Common myeloid progenitor, CD34-positive (primary cell): ENCODE measurements at regions of chr1 and their contacts with region 1.

Region 1: DNA sequence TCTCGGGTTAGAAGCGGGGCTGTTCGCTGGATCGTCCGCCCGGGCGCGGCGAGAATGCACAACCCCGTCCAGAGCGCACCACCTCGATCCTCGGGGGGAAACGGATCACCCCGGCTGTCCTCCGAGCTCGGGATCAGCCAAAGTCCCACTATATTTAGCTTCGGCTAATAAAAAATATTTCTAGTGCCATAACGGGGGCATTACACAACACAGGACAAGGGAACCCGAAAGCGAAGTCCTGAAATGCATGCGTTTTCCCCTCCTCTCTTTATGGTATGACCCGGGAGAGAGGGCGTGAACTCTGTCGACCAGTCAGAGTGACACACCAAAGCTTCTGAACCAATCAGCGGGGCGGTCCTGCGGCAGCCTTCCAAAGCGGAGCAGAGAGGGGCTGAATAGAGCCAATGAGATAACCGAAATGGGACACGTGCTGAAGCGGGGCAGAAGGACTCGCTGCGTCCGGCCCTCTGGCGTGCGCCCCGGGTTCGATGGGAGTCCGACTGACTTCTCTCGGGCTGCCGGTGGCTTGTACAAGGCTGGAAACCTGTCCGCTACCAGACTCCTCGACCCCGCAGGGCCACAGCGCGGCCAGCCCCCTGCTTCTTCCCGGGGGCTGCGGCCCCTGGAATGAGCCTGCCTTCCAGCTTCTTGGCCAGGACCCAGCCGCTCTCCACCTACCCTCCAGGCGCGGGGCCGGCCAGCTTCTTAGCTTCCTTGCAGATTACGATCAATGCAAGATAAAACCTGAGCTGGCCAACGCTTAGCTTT is at the start of gene ALDH4A1:
- DNase-seq: peak; percentile 96 to 98 (median 97)
- H3K4me3 ChIP-seq: peak within 1 kb of the TSS; percentile 62 to 91 (median 80)
- H3K27ac ChIP-seq: peak within 1 kb of the TSS; percentile 97 to 99
- H3K4me1 ChIP-seq: peaks cover 10 to 57% (median 33%) of the 10 kb centered on the region in 4 experiments
- H3K27me3 ChIP-seq: no peaks in the 10 kb centered on the region

Region 2: DNA sequence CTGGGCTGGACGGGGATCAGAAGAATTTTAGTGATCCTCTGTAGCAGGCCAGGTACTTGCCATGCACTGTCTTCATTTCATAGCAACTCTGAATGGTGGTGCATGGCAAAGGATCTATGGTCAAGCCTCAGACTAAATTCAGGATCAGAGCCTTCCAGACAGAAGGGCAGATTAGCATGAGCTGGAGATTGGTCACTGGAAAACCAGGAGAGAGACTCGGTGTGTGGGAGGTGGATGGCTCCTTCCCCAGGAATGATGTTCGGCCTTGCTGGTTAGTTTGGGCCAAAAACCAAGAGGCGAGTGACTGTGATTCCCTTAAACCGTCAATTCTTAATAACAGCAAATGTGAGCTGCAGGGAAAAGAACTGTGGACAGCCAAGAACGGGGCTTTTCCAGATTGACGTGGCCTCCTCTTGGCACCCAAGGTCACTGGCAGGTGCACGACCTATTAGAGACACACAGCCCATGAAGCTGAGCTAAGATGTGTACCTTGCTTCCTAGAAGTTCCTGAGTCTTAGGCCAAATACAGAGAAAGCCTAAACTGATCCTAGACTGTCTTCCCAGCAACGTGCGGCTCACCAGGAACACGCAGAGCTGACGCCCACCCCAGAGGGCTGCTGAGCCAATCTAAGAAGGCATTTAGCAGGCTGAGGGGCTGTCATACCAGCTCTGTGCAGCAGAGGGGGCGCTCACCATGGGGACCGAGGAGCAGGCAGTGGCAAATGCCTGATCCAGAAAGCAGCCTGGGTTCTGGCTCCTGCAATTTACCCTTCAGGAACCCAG is 18.9 kb before region 1 on chr1:
- CTCF ChIA-PET with region 1: interaction called, 21 read pairs
- POLR2A ChIA-PET with region 1: interaction called, 3 read pairs
- DNase-seq: peak; percentile 63 to 78 (median 65)
- H3K4me3 ChIP-seq: no peak overlapping the region
- H3K27ac ChIP-seq: no peak overlapping the region
- H3K4me1 ChIP-seq: no peaks in the 10 kb centered on the region
- H3K27me3 ChIP-seq: no peaks in the 10 kb centered on the region

Region 3: GRCh38 chr1:18913065-18913835 is 10.5 kb after region 1 on chr1:
- CTCF ChIA-PET with region 1: interaction called, 20 read pairs
- POLR2A ChIA-PET with region 1: interaction called, 6 read pairs
- DNase-seq: peak; percentile 66 to 68 (median 67)
- H3K4me3 ChIP-seq: no peak overlapping the region
- H3K27ac ChIP-seq: no peak overlapping the region
- H3K4me1 ChIP-seq: peaks cover 0 to 30% (median 23%) of the 10 kb centered on the region in 4 experiments
- H3K27me3 ChIP-seq: no peaks in the 10 kb centered on the region

Region 4: DNA sequence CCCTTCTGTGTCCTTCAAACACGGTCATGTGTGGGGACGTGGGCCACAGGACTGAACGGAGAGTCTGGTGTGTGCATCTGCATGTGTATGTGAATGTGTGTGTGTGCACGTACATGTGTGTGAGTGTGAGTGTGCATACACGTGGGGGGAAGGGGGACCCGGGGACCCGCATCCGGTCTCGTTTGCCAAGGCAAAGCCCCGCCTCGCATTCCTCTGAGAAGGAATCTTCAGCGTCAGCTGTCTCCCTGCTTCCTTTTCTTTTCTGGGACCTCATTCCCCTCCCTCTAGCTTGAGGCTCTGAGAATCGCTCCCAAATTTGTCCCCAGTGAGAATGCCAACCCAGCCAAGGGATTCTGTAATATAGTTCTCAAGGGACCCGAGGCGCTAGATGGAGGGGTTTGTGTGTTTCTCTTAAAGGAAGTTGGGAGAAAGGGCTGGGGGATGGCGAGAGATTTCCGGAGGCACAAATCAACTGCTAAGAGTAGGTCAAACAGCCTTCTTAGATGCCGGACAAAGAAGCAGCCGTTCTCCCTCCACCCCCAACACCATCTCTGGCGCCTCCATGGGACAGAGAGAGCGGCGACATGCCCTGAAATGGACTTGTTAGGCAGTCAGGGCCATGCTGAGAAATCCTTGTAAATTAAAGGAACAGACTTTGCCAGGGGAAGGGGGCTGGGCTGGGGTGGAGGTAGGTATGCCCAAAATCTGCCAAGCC is 47.1 kb after region 1 on chr1:
- CTCF ChIA-PET with region 1: interaction called, 40 read pairs
- POLR2A ChIA-PET with region 1: interaction called, 3 read pairs
- DNase-seq: peak in 2 of 3 donors; percentile 39 to 55
- H3K4me3 ChIP-seq: peak overlapping the region; percentile 28 to 76 (median 57)
- H3K27ac ChIP-seq: peak overlapping the region; percentile 96 to 98
- H3K4me1 ChIP-seq: peaks cover 16 to 97% (median 94%) of the 10 kb centered on the region in 4 experiments
- H3K27me3 ChIP-seq: no peaks in the 10 kb centered on the region

Region 5: DNA sequence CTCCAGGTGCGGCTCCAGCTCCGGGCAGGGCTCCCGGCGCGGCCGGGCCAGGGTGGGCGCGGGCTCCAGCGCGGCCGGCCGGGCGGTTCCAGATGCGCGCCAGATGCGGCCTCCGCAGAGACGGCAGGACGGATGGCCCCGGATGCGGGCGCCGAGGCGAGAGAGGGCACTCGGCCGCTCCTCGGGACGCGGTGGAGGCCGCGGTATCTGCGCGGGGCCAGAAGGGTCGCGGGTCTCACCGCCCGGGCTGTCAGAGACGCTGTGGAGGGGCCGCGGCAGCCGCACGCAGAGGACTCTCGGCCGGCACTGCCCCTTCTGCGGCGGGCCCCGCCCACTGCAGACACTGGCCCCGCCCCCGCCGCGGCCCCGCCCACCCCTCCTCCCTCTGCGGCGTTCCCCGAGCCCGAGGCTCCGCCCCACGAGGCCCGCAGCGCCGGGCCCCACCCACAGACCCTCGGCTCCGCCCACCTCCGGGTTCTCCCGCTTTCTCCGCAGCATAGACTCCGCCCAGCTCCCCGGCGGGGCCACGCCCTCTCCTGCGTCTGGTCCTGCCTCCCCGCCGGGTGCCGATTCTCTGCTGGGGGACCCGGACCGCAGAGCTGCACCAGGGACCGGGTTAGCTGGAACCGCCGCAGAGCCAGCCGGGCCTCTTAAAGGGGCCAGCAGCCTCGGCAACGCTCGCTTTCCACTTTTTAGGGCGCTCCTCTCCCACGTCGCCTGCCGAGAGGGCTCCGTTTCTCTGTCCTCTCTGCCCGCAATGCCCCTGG is 53.8 kb after region 1 on chr1 and contains the start of gene IFFO2:
- CTCF ChIA-PET with region 1: interaction called, 40 read pairs
- POLR2A ChIA-PET with region 1: interaction called, 7 read pairs
- DNase-seq: peak; percentile 89 to 95 (median 94)
- H3K4me3 ChIP-seq: peak within 1 kb of the TSS; percentile 65 to 90 (median 76)
- H3K27ac ChIP-seq: no peak within 1 kb of the TSS
- H3K4me1 ChIP-seq: peaks cover 11 to 55% (median 55%) of the 10 kb centered on the region in 4 experiments
- H3K27me3 ChIP-seq: peaks cover 0 to 4% (median 2%) of the 10 kb centered on the region in 5 experiments

Region 6: DNA sequence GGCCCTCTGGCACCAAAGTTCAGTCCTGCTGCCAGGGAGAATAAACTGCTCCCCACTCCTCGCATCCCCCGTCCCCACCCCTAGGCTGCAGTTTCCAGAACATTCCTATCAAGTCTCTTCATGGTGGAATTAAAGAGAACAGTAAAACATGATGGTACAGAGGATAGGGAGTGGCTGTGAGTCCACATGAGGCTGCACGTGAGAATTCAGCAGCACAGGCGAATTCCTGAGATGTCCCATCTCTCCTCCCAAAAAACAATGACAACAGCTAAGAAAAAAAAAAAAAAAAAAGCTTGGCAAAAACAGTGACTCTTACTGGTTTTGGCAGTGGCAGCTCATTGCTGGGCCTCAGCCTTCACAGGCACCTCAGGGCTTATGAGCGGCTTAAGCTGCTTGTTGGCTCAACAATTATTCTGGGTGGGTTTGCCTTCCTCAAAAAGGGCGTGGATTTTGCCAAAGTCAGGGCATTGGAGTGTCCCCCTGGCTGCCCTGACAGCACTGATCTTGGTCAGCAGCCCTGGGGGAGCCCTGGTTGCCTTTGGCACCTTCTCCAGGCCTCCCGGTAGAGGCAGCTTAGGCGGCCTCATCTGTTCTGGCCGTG is 59.5 kb after region 1 on chr1:
- CTCF ChIA-PET with region 1: interaction called, 222 read pairs
- POLR2A ChIA-PET with region 1: interaction called, 7 read pairs
- DNase-seq: no peak
- H3K4me3 ChIP-seq: no peak overlapping the region
- H3K27ac ChIP-seq: no peak overlapping the region
- H3K4me1 ChIP-seq: peaks cover 0 to 12% (median 10%) of the 10 kb centered on the region in 4 experiments
- H3K27me3 ChIP-seq: peaks cover 0 to 4% (median 2%) of the 10 kb centered on the region in 5 experiments

Region 7: DNA sequence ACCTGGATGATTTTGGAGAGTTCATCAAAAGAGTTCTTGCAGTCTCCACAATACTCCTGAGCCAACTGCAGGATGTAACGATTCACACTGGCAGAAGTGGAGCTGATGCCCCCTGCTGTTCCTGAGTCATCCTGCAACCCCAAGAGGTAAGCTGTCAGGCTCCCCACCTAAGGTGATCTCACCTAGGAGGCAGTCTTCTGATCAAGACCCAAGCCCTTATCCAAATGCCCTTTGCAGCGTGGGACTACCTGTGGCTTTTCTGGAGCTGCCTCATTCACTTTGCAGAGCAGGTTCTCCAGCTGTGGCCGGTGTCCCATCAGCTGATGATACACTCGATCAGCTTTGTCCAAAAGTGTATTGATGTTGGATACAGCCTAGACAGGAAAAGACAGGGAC is 211.0 kb after region 1 on chr1:
- CTCF ChIA-PET with region 1: interaction called, 13 read pairs
- POLR2A ChIA-PET with region 1: interaction called, 6 read pairs
- DNase-seq: peak; percentile 51 to 68 (median 65)
- H3K4me3 ChIP-seq: no peak overlapping the region
- H3K27ac ChIP-seq: no peak overlapping the region
- H3K4me1 ChIP-seq: no peaks in the 10 kb centered on the region
- H3K27me3 ChIP-seq: no peaks in the 10 kb centered on the region